ENCODE measurements at regions of chr14 and their contacts with region 1.

Region 1: GRCh38 chr14:50038398-50039119 is 77.8 kb downstream of the VCPKMT start:
- DNase-seq: peak; percentile 99 to 100 (median 99)
- H3K4me3 ChIP-seq: no peak overlapping the region
- H3K4me3 Mint-ChIP-seq: peak overlapping the region in 1 of 2 donors; percentile 28
- H3K27ac ChIP-seq: peak overlapping the region; percentile 97 to 100
- H3K27ac Mint-ChIP-seq: peak overlapping the region; percentile 99 to 100 (median 100)
- H3K4me1 ChIP-seq: peaks cover 42 to 47% of the 10 kb centered on the region in 2 donors
- H3K4me1 Mint-ChIP-seq: peaks cover 45% of the 10 kb centered on the region
- H3K27me3 ChIP-seq: no peaks in the 10 kb centered on the region
- H3K27me3 Mint-ChIP-seq: peaks cover 0 to 2% (median 0%) of the 10 kb centered on the region in 3 donors
- CTCF ChIP-seq: peak; percentile 35

Region 2: GRCh38 chr14:49732896-49733295 is 305.7 kb before region 1 on chr14:
- intact Hi-C with region 1: no loop called
- DNase-seq: no peak
- H3K4me3 ChIP-seq: no peak overlapping the region
- H3K4me3 Mint-ChIP-seq: no peak overlapping the region
- H3K27ac ChIP-seq: no peak overlapping the region
- H3K27ac Mint-ChIP-seq: peak overlapping the region in 1 of 7 donors; percentile 51
- H3K4me1 ChIP-seq: no peaks in the 10 kb centered on the region
- H3K4me1 Mint-ChIP-seq: no peaks in the 10 kb centered on the region
- H3K27me3 ChIP-seq: no peaks in the 10 kb centered on the region
- H3K27me3 Mint-ChIP-seq: no peaks in the 10 kb centered on the region
- CTCF ChIP-seq: no peak

Region 3: DNA sequence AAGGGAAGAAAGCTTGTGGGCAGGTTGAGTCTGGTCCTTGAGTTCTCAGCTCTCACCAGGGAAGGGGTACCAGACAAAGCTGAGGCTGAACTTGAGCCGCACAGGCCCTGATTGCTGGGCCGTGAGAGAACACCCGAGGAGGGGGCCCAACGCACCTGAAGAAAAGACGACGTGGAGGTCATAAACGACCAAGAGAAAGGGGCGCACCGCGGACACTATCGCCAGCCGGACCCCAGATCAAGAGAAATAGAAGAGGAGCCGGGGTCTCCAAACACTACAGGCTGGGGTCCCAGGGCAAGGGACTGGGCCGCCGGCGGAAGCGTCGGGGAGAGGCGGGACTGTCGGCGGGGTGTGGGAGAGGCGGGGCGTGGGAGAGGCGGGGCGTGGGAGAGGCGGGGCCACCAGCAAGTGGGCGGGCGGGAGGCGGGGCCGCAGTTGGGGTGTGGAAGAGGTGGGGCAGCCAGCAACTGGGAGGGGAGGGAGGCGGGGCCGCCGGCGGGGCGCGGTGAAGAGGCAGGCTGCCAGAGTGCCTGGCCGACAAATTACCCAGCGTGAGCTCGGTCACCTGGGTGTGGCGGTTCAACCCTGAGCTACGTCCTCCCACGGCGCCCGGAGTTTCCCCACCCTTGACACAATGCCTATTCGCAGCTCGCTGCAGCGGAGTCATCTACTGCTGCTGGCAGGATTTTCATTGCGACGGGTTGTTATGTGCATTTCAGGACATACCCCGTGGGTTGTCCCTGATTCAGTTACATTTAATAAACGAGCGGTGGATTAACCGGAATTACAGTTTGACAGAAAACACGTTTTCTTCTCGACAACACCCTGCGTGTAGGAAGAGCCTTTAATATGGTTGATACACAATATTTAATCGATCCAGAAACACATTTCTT is 170.5 kb before region 1 on chr14:
- intact Hi-C with region 1: loop called in 1 of 2 experiments (anchors 5 kb)
- DNase-seq: peak; percentile 97 to 99 (median 99)
- H3K4me3 ChIP-seq: peak overlapping the region; percentile 63 to 80 (median 70)
- H3K4me3 Mint-ChIP-seq: peak overlapping the region; percentile 87 to 95
- H3K27ac ChIP-seq: peak overlapping the region; percentile 81 to 96
- H3K27ac Mint-ChIP-seq: peak overlapping the region; percentile 97 to 99 (median 98)
- H3K4me1 ChIP-seq: peaks cover 51 to 59% of the 10 kb centered on the region in 2 donors
- H3K4me1 Mint-ChIP-seq: peaks cover 32% of the 10 kb centered on the region
- H3K27me3 ChIP-seq: no peaks in the 10 kb centered on the region
- H3K27me3 Mint-ChIP-seq: no peaks in the 10 kb centered on the region
- CTCF ChIP-seq: no peak

Region 4: DNA sequence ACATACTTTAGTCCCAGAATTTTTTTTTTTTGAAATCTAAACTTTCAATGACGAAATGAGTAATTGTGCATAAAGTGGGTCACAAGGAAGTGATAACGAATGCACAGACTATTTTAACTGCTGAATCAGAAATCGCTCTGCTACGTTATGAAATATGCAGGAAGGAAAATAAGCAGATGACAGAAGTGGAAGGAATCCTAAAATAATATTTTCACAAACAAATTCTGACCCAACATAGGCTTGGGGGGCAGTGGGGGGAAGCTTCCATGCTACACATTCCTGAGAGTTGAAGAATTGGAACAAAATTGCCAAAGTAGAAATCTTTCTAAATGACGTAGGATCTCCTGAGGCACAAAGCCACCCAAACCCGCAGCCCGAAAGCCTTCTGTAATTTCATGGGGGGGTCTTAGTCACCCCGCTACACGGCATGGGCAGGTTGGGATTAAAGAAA is 56.0 kb before region 1 on chr14:
- intact Hi-C with region 1: loop called in 1 of 2 experiments (anchors 10 kb)
- DNase-seq: peak in 2 of 3 donors; percentile 53 to 60
- H3K4me3 ChIP-seq: peak overlapping the region in 1 of 3 experiments; percentile 49
- H3K4me3 Mint-ChIP-seq: peak overlapping the region; percentile 32 to 55
- H3K27ac ChIP-seq: peak overlapping the region; percentile 1 to 78
- H3K27ac Mint-ChIP-seq: peak overlapping the region; percentile 57 to 86 (median 82)
- H3K4me1 ChIP-seq: peaks cover 17 to 27% of the 10 kb centered on the region in 2 donors
- H3K4me1 Mint-ChIP-seq: peaks cover 27% of the 10 kb centered on the region
- H3K27me3 ChIP-seq: no peaks in the 10 kb centered on the region
- H3K27me3 Mint-ChIP-seq: peaks cover 1 to 3% (median 2%) of the 10 kb centered on the region in 3 donors
- CTCF ChIP-seq: no peak

Region 5: DNA sequence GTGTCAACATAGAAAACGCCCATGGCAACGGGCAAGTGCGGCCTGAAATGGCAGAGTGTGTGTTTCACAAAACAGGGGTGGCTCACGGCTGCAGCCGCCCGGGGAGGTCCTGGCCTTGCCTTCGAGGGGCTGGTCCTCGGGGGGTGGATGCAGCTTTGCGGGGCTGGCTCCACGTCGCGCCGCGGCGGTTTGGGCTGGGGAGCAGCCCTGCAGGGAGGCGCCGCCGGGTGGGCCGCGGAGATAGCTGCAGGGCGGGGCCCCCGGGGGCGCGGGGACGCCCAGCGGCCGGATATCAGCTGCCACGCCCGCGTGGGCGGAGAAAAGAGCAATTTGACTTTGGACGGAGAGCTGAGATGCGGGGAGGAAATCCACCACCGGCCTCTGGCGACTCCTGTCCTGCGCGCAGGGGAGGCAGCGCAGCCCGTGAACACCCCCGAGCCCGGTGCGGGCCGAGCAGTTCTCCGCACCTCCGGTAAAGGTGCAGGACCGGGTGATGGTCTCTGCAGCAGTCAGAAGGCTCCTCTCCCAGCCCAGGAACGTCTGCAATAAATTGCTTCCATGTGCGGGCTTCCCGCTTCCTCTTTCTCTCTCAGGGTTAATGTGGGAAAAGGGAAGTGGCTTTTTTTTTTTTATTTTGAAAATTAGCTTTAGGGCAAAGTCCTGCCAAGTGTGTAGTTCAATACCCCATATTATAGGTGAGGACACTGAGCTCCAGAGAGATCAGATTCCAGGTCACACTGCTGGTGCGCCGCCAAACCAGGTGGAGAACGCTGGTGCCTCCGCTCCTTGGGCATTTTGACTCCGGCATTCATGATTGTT is 35.1 kb before region 1 on chr14:
- intact Hi-C with region 1: loop called (anchors 5 kb)
- DNase-seq: peak; percentile 79 to 86 (median 80)
- H3K4me3 ChIP-seq: peak overlapping the region; percentile 55 to 80 (median 77)
- H3K4me3 Mint-ChIP-seq: peak overlapping the region; percentile 87 to 96
- H3K27ac ChIP-seq: peak overlapping the region; percentile 83 to 99
- H3K27ac Mint-ChIP-seq: peak overlapping the region; percentile 98 to 99 (median 99)
- H3K4me1 ChIP-seq: peaks cover 57 to 65% of the 10 kb centered on the region in 2 donors
- H3K4me1 Mint-ChIP-seq: peaks cover 51% of the 10 kb centered on the region
- H3K27me3 ChIP-seq: no peaks in the 10 kb centered on the region
- H3K27me3 Mint-ChIP-seq: no peaks in the 10 kb centered on the region
- CTCF ChIP-seq: peak; percentile 11

Region 6: GRCh38 chr14:50060871-50061663 is 22.5 kb after region 1 on chr14:
- intact Hi-C with region 1: loop called in 1 of 2 experiments (anchors 1 kb)
- DNase-seq: peak; percentile 76 to 91 (median 87)
- H3K4me3 ChIP-seq: peak overlapping the region in 1 of 3 experiments; percentile 38
- H3K4me3 Mint-ChIP-seq: peak overlapping the region; percentile 27 to 59
- H3K27ac ChIP-seq: peak overlapping the region; percentile 92 to 94
- H3K27ac Mint-ChIP-seq: peak overlapping the region; percentile 95 to 100 (median 99)
- H3K4me1 ChIP-seq: peaks cover 86 to 89% of the 10 kb centered on the region in 2 donors
- H3K4me1 Mint-ChIP-seq: peaks cover 92% of the 10 kb centered on the region
- H3K27me3 ChIP-seq: no peaks in the 10 kb centered on the region
- H3K27me3 Mint-ChIP-seq: peaks cover 0 to 6% (median 2%) of the 10 kb centered on the region in 3 donors
- CTCF ChIP-seq: peak; percentile 21

Region 7: GRCh38 chr14:50085570-50086320 is 47.2 kb after region 1 on chr14:
- intact Hi-C with region 1: no loop called
- DNase-seq: peak in 1 of 3 donors; percentile 33
- H3K4me3 ChIP-seq: no peak overlapping the region
- H3K4me3 Mint-ChIP-seq: no peak overlapping the region
- H3K27ac ChIP-seq: no peak overlapping the region
- H3K27ac Mint-ChIP-seq: peak overlapping the region in 2 of 7 donors; percentile 34 to 67
- H3K4me1 ChIP-seq: peaks cover 15 to 24% of the 10 kb centered on the region in 2 donors
- H3K4me1 Mint-ChIP-seq: peaks cover 23% of the 10 kb centered on the region
- H3K27me3 ChIP-seq: no peaks in the 10 kb centered on the region
- H3K27me3 Mint-ChIP-seq: peaks cover 0 to 1% (median 0%) of the 10 kb centered on the region in 3 donors
- CTCF ChIP-seq: no peak

Region 8: DNA sequence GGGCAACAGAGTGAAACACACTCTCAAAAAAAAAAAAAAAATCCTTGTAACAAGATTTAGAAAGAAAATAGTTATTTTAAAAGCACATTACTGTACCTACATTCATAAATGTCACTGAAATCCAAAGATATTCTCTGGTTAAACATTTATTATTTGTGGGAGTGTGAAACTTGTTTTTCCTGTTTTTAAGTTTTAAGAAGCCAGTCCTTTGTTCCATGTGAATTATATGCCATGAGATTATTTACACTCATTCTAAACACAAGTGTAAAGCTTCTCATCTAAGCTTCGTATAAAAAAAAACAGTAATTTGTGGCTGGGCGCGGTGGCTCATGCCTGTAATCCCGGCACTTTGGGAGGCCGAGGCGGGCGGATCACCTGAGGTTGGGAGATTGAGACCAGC is 62.9 kb after region 1 on chr14:
- intact Hi-C with region 1: loop called in 1 of 2 experiments (anchors 5 kb)
- DNase-seq: no peak
- H3K4me3 ChIP-seq: no peak overlapping the region
- H3K4me3 Mint-ChIP-seq: no peak overlapping the region
- H3K27ac ChIP-seq: no peak overlapping the region
- H3K27ac Mint-ChIP-seq: no peak overlapping the region
- H3K4me1 ChIP-seq: peaks cover 5 to 9% of the 10 kb centered on the region in 2 donors
- H3K4me1 Mint-ChIP-seq: peaks cover 11% of the 10 kb centered on the region
- H3K27me3 ChIP-seq: no peaks in the 10 kb centered on the region
- H3K27me3 Mint-ChIP-seq: peaks cover 0 to 2% (median 0%) of the 10 kb centered on the region in 3 donors
- CTCF ChIP-seq: no peak

Measured in CD14-positive monocyte (primary cell).